ENCODE measurements at regions of chr12 and their contacts with region 1.

Region 1: DNA sequence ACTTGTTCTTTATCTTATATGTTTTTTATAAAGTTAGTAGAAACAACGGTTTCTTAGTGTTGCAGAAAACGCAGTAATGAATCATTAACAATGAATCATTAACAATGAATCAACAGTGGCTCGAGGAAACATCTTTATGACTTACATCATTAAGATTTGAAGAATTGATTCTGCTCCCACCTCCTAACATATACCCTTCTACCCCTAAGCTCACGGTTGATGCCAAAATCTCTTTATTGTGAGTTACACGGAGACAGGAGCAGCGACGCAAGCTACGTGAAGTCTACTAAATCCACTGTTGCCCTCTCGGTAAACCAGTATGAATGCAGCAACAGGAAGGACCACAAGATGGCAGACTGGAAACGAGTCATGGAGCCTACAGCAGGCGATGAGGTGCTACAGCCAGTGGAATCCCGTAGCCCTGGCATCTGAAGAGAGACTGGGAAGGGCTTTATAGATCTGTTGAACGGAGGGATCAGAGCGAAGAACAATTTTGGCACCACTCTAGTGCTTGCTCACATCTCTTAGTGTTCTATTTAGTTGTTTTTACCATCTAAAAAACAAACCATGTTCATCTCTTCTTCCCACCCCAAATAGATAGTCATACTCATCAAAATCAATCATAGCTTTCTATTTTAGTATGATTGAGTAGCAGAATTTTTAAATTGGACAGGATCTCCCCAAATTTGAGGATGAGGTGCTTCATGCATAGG is 332.7 kb downstream of the DUSP6 start:
- DNase-seq: peak; percentile 90
- ATAC-seq: peak; percentile 96
- H3K4me3 Mint-ChIP-seq: no peak overlapping the region
- H3K27ac Mint-ChIP-seq: no peak overlapping the region
- H3K4me1 Mint-ChIP-seq: peaks cover 33% of the 10 kb centered on the region
- H3K27me3 Mint-ChIP-seq: no peaks in the 10 kb centered on the region

Region 2: GRCh38 chr12:89029961-89030360 is 10.4 kb after region 1 on chr12:
- CTCF ChIA-PET with region 1: interaction called, 10 read pairs
- DNase-seq: no peak
- ATAC-seq: no peak
- H3K4me3 Mint-ChIP-seq: no peak overlapping the region
- H3K27ac Mint-ChIP-seq: no peak overlapping the region
- H3K4me1 Mint-ChIP-seq: peaks cover 29% of the 10 kb centered on the region
- H3K27me3 Mint-ChIP-seq: no peaks in the 10 kb centered on the region

Region 3: DNA sequence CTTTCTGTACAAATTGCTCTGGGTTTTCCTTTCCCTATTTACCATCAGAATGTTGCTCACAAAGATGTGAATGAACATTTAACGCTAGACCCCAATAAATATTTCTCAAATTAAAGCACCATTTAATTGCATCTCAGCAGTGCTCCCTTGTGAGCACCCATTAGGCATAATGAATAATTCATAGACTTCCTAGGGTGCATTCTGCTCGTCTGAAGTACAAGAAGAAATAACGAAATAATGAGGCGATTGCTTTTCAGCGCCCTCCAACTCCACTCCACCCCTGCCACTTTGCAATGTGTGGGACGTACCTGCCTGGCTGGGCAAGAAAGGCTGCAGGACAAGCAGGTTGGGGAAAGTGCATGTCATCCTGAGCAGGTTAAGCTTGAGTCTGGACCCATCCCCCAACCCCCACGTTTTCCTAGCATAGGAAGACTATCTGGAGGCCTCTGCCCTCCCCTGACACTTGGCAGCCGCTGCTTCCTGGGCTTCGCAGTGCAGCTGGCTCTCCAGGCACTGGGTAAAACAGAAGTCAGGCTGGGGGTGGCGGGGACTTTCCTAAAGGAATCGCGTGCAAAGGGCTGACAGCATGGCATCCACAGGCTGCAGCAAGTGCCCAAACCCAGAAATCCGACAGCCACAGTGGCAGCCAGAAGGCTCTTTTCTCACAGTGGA is 79.0 kb after region 1 on chr12:
- CTCF ChIA-PET with region 1: no interaction called
- DNase-seq: no peak
- ATAC-seq: no peak
- H3K4me3 Mint-ChIP-seq: no peak overlapping the region
- H3K27ac Mint-ChIP-seq: no peak overlapping the region
- H3K4me1 Mint-ChIP-seq: peaks cover 1% of the 10 kb centered on the region
- H3K27me3 Mint-ChIP-seq: peaks cover 3% of the 10 kb centered on the region

Region 4: GRCh38 chr12:89345830-89346740 is 326.5 kb after region 1 on chr12:
- CTCF ChIA-PET with region 1: interaction called, 12 read pairs
- DNase-seq: peak; percentile 89
- ATAC-seq: peak; percentile 81
- H3K4me3 Mint-ChIP-seq: peak overlapping the region; percentile 93
- H3K27ac Mint-ChIP-seq: peak overlapping the region; percentile 87
- H3K4me1 Mint-ChIP-seq: peaks cover 67% of the 10 kb centered on the region
- H3K27me3 Mint-ChIP-seq: no peaks in the 10 kb centered on the region

Region 5: DNA sequence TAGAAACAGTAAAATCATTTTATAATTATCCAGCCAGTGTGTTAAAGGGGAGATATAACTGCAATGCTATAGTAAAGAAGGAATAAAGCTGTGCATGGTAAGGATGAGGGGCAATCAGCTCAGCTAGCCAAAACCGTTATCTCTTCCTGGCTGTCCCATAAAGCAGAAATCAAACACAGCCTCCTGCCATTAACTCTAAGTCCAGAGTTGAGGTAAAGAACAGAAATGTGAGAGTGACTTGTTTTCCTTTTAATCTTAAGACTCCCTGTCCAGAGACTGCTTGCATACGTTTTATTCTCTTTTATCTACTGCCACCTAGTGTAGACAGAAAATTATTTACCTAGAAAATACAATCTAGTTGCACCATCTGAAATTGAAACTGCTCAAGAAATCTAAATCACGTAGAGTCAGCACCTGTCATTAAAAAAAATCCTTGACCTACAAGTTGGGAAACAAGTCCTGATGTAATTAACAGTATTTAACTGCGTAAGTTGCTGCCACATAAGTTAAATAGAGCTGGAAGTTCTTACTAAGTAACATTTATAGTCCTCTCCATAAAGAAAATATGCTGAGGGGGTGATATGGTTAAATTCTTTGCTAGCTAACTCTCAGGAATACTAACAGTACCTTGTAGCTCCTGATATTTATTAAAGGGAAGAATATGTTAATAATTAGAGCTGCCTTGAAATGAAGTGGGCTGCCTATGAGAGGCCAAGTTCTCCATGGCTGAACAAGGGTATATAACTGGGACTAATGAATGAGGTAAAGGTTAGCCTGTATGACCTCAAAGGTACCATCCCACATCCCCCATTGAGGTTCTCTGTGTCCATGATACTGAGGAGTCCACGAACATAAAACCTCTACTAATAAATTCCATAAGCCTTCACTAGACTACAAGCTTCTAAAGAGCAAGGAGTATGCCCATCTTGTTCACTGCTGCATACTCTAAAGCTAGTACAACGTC is 442.4 kb after region 1 on chr12:
- CTCF ChIA-PET with region 1: interaction called, 153 read pairs
- DNase-seq: no peak
- ATAC-seq: peak; percentile 87
- H3K4me3 Mint-ChIP-seq: peak overlapping the region; percentile 62
- H3K27ac Mint-ChIP-seq: peak overlapping the region; percentile 84
- H3K4me1 Mint-ChIP-seq: peaks cover 63% of the 10 kb centered on the region
- H3K27me3 Mint-ChIP-seq: no peaks in the 10 kb centered on the region

Region 6: DNA sequence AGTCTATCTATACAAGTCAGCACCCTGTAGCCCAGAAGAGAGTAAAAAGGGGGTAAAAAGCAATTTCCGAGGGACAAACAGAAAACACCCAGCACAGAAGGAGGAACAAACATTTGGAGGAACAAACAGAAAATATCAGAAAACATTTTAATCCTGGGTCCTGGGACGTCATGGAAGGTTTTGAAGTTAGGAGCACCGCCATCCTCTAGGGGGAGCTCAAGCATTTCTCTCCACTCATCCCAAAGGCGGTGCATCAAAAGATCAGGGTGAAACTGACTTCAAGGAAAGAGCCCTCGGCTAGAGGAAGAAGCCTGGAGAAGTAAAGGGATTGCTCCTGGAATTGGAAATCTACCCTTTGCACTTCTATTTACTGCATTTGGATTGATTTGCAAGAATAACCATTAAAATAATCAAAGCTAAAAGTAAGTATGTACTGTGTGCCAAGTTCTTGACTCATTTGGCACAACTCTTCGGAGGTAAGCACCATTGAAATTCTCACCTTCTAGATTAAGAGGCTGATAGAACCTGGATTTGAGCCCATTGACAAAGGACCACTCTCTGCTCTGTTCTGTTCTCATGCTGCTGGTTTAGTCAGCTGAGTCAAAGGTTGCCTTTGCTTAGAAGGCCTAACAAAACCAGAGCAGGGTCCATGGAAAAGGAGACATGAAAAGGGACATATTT is 523.5 kb after region 1 on chr12:
- CTCF ChIA-PET with region 1: interaction called, 10 read pairs
- DNase-seq: peak; percentile 72
- ATAC-seq: peak; percentile 82
- H3K4me3 Mint-ChIP-seq: no peak overlapping the region
- H3K27ac Mint-ChIP-seq: no peak overlapping the region
- H3K4me1 Mint-ChIP-seq: peaks cover 7% of the 10 kb centered on the region
- H3K27me3 Mint-ChIP-seq: no peaks in the 10 kb centered on the region